ENCODE measurements at regions of chr1 and their contacts with region 1.

Region 1: DNA sequence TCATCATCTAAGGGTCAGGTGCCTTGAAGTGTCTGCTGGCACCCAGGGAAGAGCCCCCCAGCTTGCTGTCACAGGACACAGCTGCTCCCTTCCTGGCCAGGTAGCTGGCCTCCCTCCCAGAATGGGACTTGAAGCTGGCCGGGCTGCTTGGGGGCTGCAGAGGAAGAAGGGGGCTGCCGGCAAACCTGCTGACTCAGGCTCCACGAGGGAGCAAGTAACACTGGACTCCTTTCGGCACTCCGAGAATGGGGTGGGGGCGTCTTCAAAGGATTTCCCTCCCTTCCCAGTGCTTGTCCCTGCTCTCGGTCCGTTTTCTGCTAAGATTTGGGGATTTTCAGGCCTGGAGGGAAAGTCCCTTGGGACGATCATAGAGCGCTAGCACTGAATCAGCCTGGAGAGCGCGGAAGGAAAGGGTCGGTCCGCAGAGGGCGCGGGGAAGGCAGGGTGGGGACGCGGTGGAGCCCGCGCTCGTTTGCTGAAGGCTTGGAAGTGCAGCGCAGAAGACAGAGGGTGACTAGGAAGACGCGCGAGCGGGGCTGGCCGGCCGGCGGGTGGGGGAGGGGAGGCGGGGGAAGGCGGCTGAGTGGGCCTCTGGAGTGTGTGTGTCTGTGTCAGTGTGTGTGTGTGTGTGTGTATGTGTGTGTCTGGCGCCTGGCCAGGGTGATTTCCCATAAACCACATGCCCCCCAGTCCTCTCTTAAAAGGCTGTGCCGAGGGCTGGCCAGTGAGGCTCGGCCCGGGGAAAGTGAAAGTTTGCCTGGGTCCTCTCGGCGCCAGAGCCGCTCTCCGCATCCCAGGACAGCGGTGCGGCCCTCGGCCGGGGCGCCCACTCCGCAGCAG is at the start of gene CSF1:
- DNase-seq: peak; percentile 82
- ATAC-seq: peak; percentile 85 to 87
- H3K4me3 ChIP-seq: peak within 1 kb of the TSS; percentile 71
- H3K27ac ChIP-seq: peak within 1 kb of the TSS; percentile 76
- H3K4me1 ChIP-seq: peaks cover 66% of the 10 kb centered on the region
- H3K27me3 ChIP-seq: no peaks in the 10 kb centered on the region
- CTCF ChIP-seq: no peak
- total RNA-seq, gene CSF1: 64.3 TPM

Region 2: DNA sequence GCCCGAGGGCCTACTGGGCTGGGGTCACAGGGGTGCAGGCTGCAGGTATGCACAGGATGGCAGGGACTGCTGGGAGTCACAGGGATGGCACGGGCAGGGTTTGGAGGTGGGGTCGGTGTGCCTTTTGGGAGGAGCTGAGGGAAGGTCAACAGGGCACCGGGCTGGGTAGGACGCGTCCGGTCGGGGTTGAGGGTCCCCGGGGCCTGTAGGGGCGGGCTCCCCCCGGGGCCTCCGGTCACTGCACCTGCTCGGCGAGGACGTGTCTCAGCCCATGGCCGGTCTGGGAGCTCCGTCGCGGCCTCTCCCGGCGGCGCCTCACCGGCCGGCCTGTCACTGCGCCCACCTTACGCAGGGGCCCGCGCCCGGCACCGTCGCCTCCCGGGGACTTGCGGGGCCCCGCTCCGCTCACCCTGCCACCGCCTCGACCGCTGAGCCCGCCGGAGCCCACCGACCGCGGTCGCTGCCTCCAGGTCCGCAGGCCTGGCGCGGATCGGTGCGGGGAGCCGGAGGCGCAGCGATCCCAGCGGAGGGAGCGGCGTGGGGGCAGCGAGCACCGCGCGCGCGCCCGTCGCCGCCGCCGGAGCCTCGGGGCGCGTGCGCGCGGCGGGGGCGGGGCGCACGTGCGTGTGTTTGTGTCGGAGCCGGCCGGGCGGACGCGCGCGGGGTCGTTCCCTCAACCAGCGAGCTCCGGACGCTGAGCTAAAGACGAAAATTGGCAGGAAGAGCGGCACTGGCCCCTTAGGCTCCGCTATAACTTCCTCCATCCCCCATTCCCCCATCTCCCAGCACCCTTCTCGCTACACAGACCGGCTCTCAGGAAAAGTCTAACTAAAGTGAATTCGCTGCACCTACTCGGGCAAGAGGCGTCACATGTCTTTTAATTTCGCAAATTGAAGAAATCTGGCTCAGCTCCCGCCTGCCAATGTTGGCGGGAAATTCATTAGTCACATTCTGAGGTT is 400.9 kb before region 1 on chr1 and contains the start of gene AMIGO1:
- intact Hi-C with region 1: no loop called
- DNase-seq: peak; percentile 77
- ATAC-seq: peak; percentile 85 to 89
- H3K4me3 ChIP-seq: peak within 1 kb of the TSS; percentile 81
- H3K27ac ChIP-seq: peak within 1 kb of the TSS; percentile 60
- H3K4me1 ChIP-seq: peaks cover 16% of the 10 kb centered on the region
- H3K27me3 ChIP-seq: no peaks in the 10 kb centered on the region
- CTCF ChIP-seq: no peak
- total RNA-seq, gene AMIGO1: 9.1 TPM

Region 3: DNA sequence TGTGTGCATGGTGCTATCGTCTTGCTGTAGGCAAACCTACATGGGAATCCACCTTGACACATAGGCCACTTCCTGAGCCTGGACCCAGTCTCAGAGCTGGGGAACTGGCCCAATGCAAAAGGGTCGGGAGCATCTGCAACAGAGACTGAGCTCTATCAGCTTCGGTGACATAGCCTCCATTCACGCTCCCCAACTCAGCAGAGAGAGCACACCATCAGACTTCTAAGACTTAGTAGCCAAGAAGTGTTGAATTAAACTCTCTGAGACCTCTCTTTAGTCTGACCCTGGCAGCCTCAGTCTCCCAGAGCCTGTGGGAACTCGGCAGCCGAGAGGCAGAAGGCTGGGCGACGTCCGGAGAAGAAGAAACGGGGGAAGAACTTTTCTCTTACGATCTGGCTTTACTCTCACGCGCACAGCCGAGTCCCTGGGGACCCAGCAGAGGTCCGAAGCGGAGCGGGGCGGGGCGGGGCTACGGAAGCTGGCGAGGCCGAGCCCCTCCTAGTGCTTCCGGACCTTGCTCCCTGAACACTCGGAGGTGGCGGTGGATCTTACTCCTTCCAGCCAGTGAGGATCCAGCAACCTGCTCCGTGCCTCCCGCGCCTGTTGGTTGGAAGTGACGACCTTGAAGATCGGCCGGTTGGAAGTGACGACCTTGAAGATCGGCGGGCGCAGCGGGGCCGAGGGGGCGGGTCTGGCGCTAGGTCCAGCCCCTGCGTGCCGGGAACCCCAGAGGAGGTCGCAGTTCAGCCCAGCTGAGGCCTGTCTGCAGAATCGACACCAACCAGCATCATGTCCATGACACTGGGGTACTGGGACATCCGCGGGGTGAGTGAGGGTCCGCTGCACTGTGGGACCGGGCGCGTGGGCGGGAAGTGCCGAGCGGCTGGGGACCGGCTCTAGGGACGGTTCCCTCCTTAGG is 254.5 kb before region 1 on chr1 and contains the start of gene GSTM4:
- intact Hi-C with region 1: no loop called
- DNase-seq: peak; percentile 91
- ATAC-seq: peak; percentile 95 to 98
- H3K4me3 ChIP-seq: peak within 1 kb of the TSS; percentile 79
- H3K27ac ChIP-seq: peak within 1 kb of the TSS; percentile 88
- H3K4me1 ChIP-seq: peaks cover 11% of the 10 kb centered on the region
- H3K27me3 ChIP-seq: no peaks in the 10 kb centered on the region
- CTCF ChIP-seq: no peak
- total RNA-seq, gene GSTM4: 15.7 TPM

Region 4: DNA sequence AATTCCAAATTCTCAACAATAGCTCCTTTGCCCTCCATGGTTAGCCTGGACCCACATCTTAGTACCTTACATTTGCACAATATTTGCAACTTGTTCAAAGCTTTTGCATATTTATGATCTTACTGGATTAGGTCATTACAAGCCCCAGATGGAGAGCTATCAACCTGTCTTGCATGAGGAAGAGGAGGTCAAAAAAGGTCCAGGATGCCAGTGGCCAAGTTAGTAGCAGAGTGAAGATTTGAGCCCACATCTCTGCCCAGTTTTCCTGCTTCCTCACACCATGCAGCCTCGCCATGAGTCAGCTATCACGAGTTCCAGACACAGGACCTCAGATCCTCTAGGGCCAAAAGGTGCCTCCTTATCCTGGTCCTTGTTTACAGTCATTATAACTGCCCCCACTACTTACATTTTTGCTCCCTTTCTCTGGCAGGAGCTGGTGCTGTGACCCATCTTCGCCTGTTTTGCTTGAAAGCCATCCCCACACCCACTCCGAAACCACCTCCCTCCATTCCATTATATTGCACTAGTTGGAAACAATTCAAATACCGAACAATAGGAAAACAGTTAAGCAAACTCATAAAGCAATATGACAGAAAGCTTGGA is 69.2 kb after region 1 on chr1:
- intact Hi-C with region 1: loop called (anchors 10 kb)
- DNase-seq: no peak
- ATAC-seq: no peak
- H3K4me3 ChIP-seq: no peak overlapping the region
- H3K27ac ChIP-seq: peak overlapping the region; percentile 4
- H3K4me1 ChIP-seq: peaks cover 40% of the 10 kb centered on the region
- H3K27me3 ChIP-seq: no peaks in the 10 kb centered on the region
- CTCF ChIP-seq: no peak